Natural killer cell (primary cell): ENCODE measurements at regions of chr9 and their contacts with region 1.

Region 1: DNA sequence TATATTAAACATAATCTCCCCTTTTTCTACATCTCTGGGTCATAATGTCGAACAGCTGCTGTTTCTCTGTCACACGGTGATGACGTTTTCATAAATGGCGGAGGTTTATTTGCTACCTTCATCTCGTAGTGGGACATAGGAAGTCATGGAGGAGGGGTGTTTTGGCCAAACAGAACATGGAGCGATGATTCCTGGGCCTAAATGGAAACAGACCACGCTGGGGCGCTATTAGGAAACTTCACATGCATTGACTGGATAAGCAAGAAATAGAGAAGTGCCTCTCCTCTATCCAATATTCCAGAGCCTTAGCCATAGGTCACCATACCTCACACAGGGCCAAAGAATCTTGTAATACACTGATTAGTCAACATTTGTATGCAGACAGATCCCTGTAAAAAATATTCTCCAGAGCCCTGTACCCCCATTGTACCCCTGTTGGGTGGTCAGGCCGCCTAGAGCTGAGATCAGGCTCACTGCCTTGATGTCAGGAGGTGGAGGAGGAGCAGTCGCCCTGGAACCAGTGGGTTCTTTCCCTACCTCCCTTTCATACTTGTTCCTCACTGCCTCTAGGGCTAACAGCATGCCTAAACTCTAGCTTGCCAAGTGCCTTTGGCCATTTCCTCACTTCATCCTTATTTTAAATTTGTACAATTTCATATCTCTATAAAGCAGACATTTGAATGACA is 77.8 kb upstream of the SPIN1 start:
- DNase-seq: no peak
- ATAC-seq: no peak
- H3K4me3 ChIP-seq: no peak overlapping the region
- H3K4me3 Mint-ChIP-seq: no peak overlapping the region
- H3K27ac ChIP-seq: no peak overlapping the region
- H3K27ac Mint-ChIP-seq: no peak overlapping the region
- H3K4me1 ChIP-seq: no peaks in the 10 kb centered on the region
- H3K4me1 Mint-ChIP-seq: peaks cover 7 to 8% of the 10 kb centered on the region in 2 donors
- H3K27me3 ChIP-seq: peaks cover 3% of the 10 kb centered on the region
- H3K27me3 Mint-ChIP-seq: peaks cover under 1 to 9% of the 10 kb centered on the region in 2 donors
- CTCF ChIP-seq: no peak

Region 2: GRCh38 chr9:88255830-88256610 is 54.4 kb before region 1 on chr9:
- intact Hi-C with region 1: no loop called
- DNase-seq: no peak
- ATAC-seq: no peak
- H3K4me3 ChIP-seq: no peak overlapping the region
- H3K4me3 Mint-ChIP-seq: no peak overlapping the region
- H3K27ac ChIP-seq: no peak overlapping the region
- H3K27ac Mint-ChIP-seq: no peak overlapping the region
- H3K4me1 ChIP-seq: no peaks in the 10 kb centered on the region
- H3K4me1 Mint-ChIP-seq: no peaks in the 10 kb centered on the region
- H3K27me3 ChIP-seq: no peaks in the 10 kb centered on the region
- H3K27me3 Mint-ChIP-seq: peaks cover 12 to 17% of the 10 kb centered on the region in 2 donors
- CTCF ChIP-seq: no peak

Region 3: DNA sequence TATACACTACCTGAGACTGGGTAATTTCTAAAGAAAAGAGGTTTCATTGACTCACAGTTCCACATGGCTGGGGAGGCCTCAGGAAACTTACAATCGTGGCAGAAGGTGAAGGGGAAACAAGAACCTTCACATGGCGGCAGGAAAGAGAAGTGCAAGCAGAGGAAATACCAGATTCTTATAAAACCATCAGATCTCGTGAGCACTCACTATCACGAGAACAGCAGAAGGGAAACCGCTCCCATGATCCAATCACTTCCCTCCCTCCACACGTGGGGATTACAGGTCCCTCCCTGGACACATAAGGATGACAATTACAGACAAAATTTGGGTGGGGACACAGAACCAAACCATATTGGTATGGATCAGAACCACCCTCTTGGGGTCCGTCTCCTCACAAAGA is 33.6 kb after region 1 on chr9:
- intact Hi-C with region 1: no loop called
- DNase-seq: no peak
- ATAC-seq: no peak
- H3K4me3 ChIP-seq: no peak overlapping the region
- H3K4me3 Mint-ChIP-seq: no peak overlapping the region
- H3K27ac ChIP-seq: no peak overlapping the region
- H3K27ac Mint-ChIP-seq: no peak overlapping the region
- H3K4me1 ChIP-seq: no peaks in the 10 kb centered on the region
- H3K4me1 Mint-ChIP-seq: peaks cover 0 to 11% of the 10 kb centered on the region in 2 donors
- H3K27me3 ChIP-seq: no peaks in the 10 kb centered on the region
- H3K27me3 Mint-ChIP-seq: peaks cover 0 to 4% of the 10 kb centered on the region in 2 donors
- CTCF ChIP-seq: no peak

Region 4: DNA sequence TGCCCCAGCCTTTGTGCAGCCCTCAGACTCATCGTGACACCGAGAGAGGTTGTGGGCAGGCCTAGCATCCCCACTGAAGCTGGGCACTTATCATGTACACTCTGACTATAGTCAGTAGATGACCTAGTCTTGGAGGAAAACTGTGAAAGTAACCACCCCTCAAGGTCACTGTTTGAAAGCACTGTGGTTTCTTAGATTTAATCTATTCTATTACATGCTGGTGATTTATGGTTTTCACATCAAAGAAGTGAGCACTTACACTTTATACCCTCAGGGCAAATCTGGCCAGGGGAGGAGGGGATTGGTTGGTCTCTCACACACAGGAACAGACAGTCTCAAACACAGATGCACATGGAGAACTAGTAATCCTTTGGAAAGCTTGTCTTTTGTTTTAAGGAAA is 59.8 kb after region 1 on chr9:
- intact Hi-C with region 1: no loop called
- DNase-seq: no peak
- ATAC-seq: peak in 1 of 3 donors; percentile 37
- H3K4me3 ChIP-seq: no peak overlapping the region
- H3K4me3 Mint-ChIP-seq: no peak overlapping the region
- H3K27ac ChIP-seq: no peak overlapping the region
- H3K27ac Mint-ChIP-seq: no peak overlapping the region
- H3K4me1 ChIP-seq: peaks cover 4% of the 10 kb centered on the region
- H3K4me1 Mint-ChIP-seq: peaks cover 8 to 9% of the 10 kb centered on the region in 2 donors
- H3K27me3 ChIP-seq: no peaks in the 10 kb centered on the region
- H3K27me3 Mint-ChIP-seq: peaks cover 18 to 19% of the 10 kb centered on the region in 2 donors
- CTCF ChIP-seq: no peak

Region 5: GRCh38 chr9:88534456-88535261 is 224.2 kb after region 1 on chr9 and contains the start of gene NXNL2:
- intact Hi-C with region 1: loop called (anchors 10 kb)
- DNase-seq: peak in 1 of 2 donors; percentile 65
- ATAC-seq: peak; percentile 63 to 78 (median 78)
- H3K4me3 ChIP-seq: peak within 1 kb of the TSS; percentile 30
- H3K4me3 Mint-ChIP-seq: peak within 1 kb of the TSS; percentile 85
- H3K27ac ChIP-seq: no peak within 1 kb of the TSS
- H3K27ac Mint-ChIP-seq: peak within 1 kb of the TSS in 1 of 2 donors; percentile 25
- H3K4me1 ChIP-seq: peaks cover 15% of the 10 kb centered on the region
- H3K4me1 Mint-ChIP-seq: peaks cover 6 to 29% of the 10 kb centered on the region in 2 donors
- H3K27me3 ChIP-seq: peaks cover 33% of the 10 kb centered on the region
- H3K27me3 Mint-ChIP-seq: peaks cover 23 to 27% of the 10 kb centered on the region in 2 donors
- CTCF ChIP-seq: no peak
- total RNA-seq, gene NXNL2: not detected

Region 6: GRCh38 chr9:89071591-89071990 is 761.1 kb after region 1 on chr9:
- intact Hi-C with region 1: no loop called
- DNase-seq: no peak
- ATAC-seq: no peak
- H3K4me3 ChIP-seq: no peak overlapping the region
- H3K4me3 Mint-ChIP-seq: no peak overlapping the region
- H3K27ac ChIP-seq: no peak overlapping the region
- H3K27ac Mint-ChIP-seq: no peak overlapping the region
- H3K4me1 ChIP-seq: no peaks in the 10 kb centered on the region
- H3K4me1 Mint-ChIP-seq: no peaks in the 10 kb centered on the region
- H3K27me3 ChIP-seq: no peaks in the 10 kb centered on the region
- H3K27me3 Mint-ChIP-seq: peaks cover 6 to 31% of the 10 kb centered on the region in 2 donors
- CTCF ChIP-seq: no peak